Mucosa of descending colon (tissue), 3 donors: ENCODE measurements at regions of chr10 and their contacts with region 1.

Region 1: GRCh38 chr10:124741281-124741921 is 2.8 kb downstream of the FAM53B start:
- DNase-seq: peak; percentile 83 to 96 (median 87)
- ATAC-seq: peak; percentile 56
- H3K4me3 ChIP-seq: no peak overlapping the region
- H3K4me1 ChIP-seq: peaks cover 68% of the 10 kb centered on the region
- CTCF ChIP-seq: peak; percentile 55

Region 2: DNA sequence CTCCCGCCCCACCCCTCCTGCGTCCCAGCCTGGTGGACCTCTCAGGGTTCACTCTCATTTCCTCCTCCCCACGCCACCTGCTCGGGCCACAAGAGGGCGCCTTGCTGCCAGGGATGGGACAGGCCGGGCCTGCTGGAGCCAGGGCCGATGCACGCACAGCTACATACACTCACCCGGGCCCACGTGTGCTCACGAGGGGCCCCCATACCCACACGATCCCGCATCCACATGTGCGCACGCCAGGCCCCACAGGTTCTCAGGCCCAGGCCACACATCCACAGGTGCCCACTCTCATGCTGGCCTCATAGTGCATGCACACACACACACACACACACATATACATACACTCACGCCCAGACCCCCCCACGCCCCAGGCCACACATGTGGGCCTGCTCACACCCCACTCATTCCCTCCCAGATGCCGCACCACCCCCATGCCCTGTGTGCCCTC is 211.2 kb before region 1 on chr10:
- intact Hi-C with region 1: loop called (anchors 5 kb)
- DNase-seq: peak; percentile 89 to 94 (median 91)
- ATAC-seq: peak; percentile 93
- H3K4me3 ChIP-seq: no peak overlapping the region
- H3K4me1 ChIP-seq: peaks cover 5% of the 10 kb centered on the region
- CTCF ChIP-seq: peak; percentile 90

Region 3: DNA sequence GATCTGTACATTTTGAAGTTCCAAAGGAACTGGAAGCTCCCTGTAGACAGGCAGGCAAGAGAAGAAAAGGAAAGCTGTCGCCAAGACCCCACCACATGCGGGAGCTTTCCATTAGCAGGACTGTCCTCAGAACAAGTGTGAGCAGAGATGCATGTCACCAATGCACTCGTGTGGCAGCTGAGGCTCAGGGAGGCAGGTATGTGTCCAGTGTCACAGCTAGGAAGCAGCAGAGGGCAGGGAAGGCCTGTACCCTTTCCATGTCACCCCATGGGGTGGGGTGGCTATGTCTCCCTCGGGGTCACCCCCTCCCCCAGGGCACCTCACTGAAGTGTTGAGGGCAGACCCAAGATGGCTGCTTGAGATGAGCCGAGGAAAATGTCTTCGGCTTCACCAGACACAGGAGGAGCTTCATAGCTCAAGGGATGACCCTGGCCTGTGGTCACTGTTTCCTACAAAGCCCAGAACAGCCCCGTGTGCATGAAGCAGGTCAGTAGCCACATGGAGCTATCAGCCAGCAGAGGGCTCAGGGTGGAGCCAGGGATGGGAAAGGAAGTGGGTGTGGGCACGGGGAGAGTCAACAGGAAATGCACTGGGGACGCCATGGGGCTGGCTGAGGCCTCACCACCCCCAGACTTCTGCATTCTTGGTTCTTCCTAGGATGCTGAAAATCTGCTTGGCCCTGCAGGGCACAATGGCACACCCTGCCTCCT is 93.8 kb before region 1 on chr10:
- intact Hi-C with region 1: loop called (anchors 10 kb)
- DNase-seq: peak; percentile 78 to 89 (median 79)
- ATAC-seq: peak; percentile 86
- H3K4me3 ChIP-seq: no peak overlapping the region
- H3K4me1 ChIP-seq: peaks cover 34% of the 10 kb centered on the region
- CTCF ChIP-seq: no peak